Endothelial cell of umbilical vein (primary cell): ENCODE measurements at regions of chr1 and their contacts with region 1.

Region 1: DNA sequence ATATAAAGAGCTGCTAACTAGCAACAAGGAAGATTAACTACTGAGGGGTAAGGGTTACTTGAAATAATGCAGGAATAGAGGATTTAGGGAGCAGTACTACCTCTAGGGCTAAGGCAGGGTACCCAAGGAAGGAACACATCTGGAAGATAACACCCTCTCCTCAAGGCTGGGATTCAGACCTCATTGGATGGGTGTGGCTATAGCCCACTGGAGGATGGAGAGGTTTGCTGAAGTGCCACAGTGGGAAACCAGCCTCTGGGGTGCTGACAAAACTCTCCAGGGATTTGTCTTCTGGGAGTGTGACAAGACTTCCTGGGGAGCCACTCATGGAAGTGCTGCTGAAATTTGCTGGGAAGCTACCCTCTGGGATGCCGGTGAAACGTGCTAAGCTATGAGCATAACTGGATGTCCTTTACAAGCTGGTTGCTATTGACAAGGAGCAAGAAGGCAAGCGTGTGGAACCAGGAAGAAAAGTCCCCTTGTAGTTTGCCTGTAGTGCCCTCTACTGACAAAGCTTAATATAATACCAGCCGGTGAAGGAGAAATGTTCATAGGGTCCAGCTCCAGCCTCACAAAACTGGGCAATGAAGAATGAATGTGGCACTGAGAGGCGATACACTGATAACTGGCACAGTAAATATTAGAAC is 122.8 kb upstream of the USP24 start:
- DNase-seq: peak; percentile 79
- H3K4me3 ChIP-seq: no peak overlapping the region
- H3K27ac ChIP-seq: no peak overlapping the region
- H3K4me1 ChIP-seq: peaks cover 16% of the 10 kb centered on the region
- H3K27me3 ChIP-seq: no peaks in the 10 kb centered on the region
- CTCF ChIP-seq: peak; percentile 52 to 63
- POLR2A ChIP-seq: no peak

Region 2: DNA sequence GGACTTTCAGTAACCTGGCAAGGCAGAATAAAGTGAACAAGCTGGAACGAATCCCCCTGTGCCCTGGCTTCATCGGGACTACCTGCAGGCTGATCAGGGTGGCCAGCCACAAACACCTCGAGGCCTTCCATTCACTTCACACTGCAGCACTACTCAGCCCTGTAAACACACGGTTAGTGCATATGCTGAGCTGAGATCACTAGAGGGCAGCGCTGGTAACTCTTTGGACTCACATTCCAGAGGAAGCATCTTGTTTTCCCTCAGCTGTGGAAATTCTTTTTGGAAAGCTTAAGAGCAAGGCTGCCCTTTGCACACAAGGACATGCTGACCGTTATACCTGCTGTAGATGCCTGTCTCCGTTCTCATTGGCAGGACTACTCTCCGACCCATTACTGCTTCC is 266.4 kb before region 1 on chr1:
- CTCF ChIA-PET with region 1: interaction called, 5 read pairs
- POLR2A ChIA-PET with region 1: no interaction called
- dilution Hi-C with region 1: no loop called
- intact Hi-C with region 1: loop called (anchors 5 kb)
- DNase-seq: peak; percentile 63
- H3K4me3 ChIP-seq: no peak overlapping the region
- H3K27ac ChIP-seq: no peak overlapping the region
- H3K4me1 ChIP-seq: no peaks in the 10 kb centered on the region
- H3K27me3 ChIP-seq: no peaks in the 10 kb centered on the region
- CTCF ChIP-seq: peak; percentile 16 to 49
- POLR2A ChIP-seq: no peak

Region 3: GRCh38 chr1:55179177-55179835 is 158.6 kb before region 1 on chr1:
- CTCF ChIA-PET with region 1: no interaction called
- POLR2A ChIA-PET with region 1: no interaction called
- dilution Hi-C with region 1: no loop called
- intact Hi-C with region 1: no loop called
- DNase-seq: no peak
- H3K4me3 ChIP-seq: no peak overlapping the region
- H3K27ac ChIP-seq: no peak overlapping the region
- H3K4me1 ChIP-seq: no peaks in the 10 kb centered on the region
- H3K27me3 ChIP-seq: no peaks in the 10 kb centered on the region
- CTCF ChIP-seq: no peak
- POLR2A ChIP-seq: no peak

Region 4: DNA sequence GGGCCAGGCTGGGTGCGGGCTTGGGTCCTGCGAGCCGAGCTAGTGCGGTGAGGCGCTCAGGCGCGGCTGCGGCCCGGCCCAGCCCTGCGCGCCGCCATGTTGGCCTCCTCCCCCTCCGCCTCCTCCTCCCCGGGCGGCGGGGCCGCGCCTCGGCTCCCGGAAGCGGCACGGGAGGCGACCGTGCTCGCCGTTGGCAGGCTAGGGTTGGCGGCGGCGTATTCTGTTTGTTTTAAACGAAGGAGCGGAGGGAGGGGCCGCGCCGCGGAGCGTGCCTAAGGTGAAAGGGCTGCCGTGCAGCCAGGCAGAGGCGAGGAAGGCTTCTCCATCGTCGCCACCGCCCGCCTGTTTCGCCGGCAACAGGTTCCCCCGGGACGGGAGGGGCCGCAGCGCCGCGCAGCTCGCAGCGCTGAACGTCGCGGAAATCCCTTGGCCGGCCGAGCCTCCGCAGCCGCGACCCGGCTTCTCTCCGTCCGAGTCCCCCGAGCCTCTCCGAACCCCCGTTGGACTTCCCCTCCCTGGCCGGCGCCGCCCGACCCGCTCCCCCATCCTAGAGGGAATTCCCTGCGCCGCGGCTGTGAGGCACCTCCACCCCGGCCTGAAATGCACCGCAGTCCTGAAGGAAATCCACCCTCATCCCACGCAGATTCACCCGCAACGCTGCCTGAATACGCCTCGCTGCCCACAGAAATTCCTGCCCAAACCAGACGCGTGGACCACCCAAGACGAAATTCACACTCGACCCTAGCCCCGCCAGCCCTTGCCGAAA is 122.5 kb before region 1 on chr1 and contains the start of gene USP24:
- CTCF ChIA-PET with region 1: interaction called, 3 read pairs
- POLR2A ChIA-PET with region 1: no interaction called
- dilution Hi-C with region 1: no loop called
- intact Hi-C with region 1: loop called (anchors 2 kb)
- DNase-seq: peak; percentile 69
- H3K4me3 ChIP-seq: peak within 1 kb of the TSS; percentile 46 to 79 (median 49)
- H3K27ac ChIP-seq: peak within 1 kb of the TSS; percentile 34
- H3K4me1 ChIP-seq: peaks cover 17% of the 10 kb centered on the region
- H3K27me3 ChIP-seq: no peaks in the 10 kb centered on the region
- CTCF ChIP-seq: no peak
- POLR2A ChIP-seq: peak; percentile 72
- total RNA-seq, gene USP24: 30.0 and 32.6 TPM in 2 replicates

Region 5: DNA sequence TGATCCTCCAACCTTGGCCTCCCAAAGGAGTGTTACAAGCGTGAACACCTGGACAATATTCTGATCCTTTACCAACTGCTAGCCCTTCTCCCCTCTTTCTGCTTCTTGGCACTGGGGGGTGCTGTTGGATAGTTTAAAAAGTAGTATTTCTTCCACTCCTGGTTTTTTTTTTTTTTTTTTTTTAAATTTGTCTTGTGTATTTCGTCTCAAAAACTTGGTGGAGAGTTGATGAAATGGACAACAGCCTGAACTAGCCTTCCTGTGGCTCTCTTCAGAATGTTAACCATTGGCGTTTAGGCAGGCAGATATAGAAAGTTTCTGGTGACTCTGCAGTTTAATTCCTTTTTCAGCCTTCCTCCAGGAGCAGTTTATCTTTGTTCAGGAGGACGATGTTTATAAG is 53.1 kb before region 1 on chr1:
- CTCF ChIA-PET with region 1: interaction called, 192 read pairs
- POLR2A ChIA-PET with region 1: no interaction called
- dilution Hi-C with region 1: no loop called
- intact Hi-C with region 1: loop called (anchors 1 kb)
- DNase-seq: peak; percentile 64
- H3K4me3 ChIP-seq: no peak overlapping the region
- H3K27ac ChIP-seq: no peak overlapping the region
- H3K4me1 ChIP-seq: peaks cover 12% of the 10 kb centered on the region
- H3K27me3 ChIP-seq: no peaks in the 10 kb centered on the region
- CTCF ChIP-seq: peak; percentile 56 to 59
- POLR2A ChIP-seq: no peak

Region 6: DNA sequence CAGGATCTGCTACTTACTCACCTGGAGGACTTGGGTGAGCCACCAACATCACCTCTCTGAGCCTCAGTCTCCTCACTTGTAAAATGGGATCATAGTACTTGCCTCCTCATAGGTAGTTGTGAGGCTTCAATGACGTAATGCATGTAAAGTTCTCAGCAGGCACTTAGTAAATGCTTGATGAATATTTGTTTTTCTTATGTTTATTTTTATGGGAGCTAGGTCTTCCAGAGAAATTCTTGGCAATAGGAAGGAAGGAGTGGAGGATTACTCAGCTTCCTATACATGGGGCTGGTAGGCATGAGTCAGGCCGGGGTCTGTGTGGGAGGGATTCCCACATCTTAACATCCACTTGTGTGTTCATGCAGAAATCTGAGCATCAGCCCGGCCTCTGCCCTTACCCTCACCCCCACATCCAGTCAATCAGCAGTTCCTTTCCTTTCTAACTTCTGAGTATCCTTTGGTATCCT is 27.4 kb before region 1 on chr1:
- CTCF ChIA-PET with region 1: interaction called, 36 read pairs
- POLR2A ChIA-PET with region 1: no interaction called
- dilution Hi-C with region 1: no loop called
- intact Hi-C with region 1: loop called (anchors 1 kb)
- DNase-seq: peak; percentile 98
- H3K4me3 ChIP-seq: peak overlapping the region in 1 of 3 experiments; percentile 10
- H3K27ac ChIP-seq: peak overlapping the region; percentile 93
- H3K4me1 ChIP-seq: peaks cover 32% of the 10 kb centered on the region
- H3K27me3 ChIP-seq: no peaks in the 10 kb centered on the region
- CTCF ChIP-seq: no peak
- POLR2A ChIP-seq: peak; percentile 19

Region 7: GRCh38 chr1:55478742-55479141 is 140.8 kb after region 1 on chr1:
- CTCF ChIA-PET with region 1: interaction called, 12 read pairs
- POLR2A ChIA-PET with region 1: no interaction called
- dilution Hi-C with region 1: no loop called
- intact Hi-C with region 1: no loop called
- DNase-seq: peak; percentile 68
- H3K4me3 ChIP-seq: no peak overlapping the region
- H3K27ac ChIP-seq: no peak overlapping the region
- H3K4me1 ChIP-seq: peaks cover 19% of the 10 kb centered on the region
- H3K27me3 ChIP-seq: no peaks in the 10 kb centered on the region
- CTCF ChIP-seq: peak in 1 of 2 donors; percentile 19
- POLR2A ChIP-seq: no peak

Region 8: DNA sequence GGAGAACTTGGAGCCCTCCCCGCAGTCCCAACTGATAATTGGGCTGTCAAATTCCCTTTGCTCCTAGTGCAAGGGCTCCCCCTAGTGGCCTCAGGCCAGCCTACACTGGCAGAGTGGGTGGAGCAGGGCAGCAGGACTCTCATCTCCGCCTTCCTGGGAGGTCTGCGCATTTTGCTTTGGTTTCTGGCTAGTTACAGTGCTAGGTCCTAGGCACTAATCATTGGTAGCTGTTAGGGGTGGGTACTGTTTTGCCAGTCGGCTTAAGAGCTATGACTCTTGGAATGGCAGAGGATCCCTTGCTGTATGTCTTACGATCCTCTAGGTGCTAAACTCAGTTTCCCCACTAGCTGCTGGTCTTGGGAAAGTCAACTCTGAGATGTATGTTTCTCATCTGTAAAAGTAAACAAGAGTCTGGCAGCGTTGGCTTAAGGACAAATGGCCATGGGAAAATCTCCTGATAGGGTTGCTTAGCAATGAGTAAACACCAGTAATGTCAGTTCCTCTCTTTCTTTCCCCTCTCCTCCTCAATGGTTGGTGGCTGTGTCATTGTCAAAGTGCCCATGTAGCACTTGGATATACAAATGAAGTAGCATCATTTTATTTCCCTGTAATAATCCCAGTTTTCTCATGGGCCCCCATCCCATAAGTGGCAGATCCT is 1483.3 kb after region 1 on chr1:
- CTCF ChIA-PET with region 1: interaction called, 10 read pairs
- POLR2A ChIA-PET with region 1: no interaction called
- dilution Hi-C with region 1: no loop called
- intact Hi-C with region 1: no loop called
- DNase-seq: peak; percentile 62
- H3K4me3 ChIP-seq: no peak overlapping the region
- H3K27ac ChIP-seq: no peak overlapping the region
- H3K4me1 ChIP-seq: no peaks in the 10 kb centered on the region
- H3K27me3 ChIP-seq: no peaks in the 10 kb centered on the region
- CTCF ChIP-seq: peak; percentile 93 to 95
- POLR2A ChIP-seq: no peak